OCI-LY7 (cell line): ENCODE measurements at regions of chr2 and their contacts with region 1.

Region 1: GRCh38 chr2:118548880-118549488 is 298.5 kb downstream of the EN1 start:
- DNase-seq: no peak
- H3K4me3 ChIP-seq: no peak overlapping the region
- H3K27ac ChIP-seq: no peak overlapping the region
- H3K4me1 ChIP-seq: no peaks in the 10 kb centered on the region
- CTCF ChIP-seq: no peak

Region 2: GRCh38 chr2:119085613-119086012 is 536.6 kb after region 1 on chr2:
- CTCF ChIA-PET with region 1: no interaction called
- POLR2A ChIA-PET with region 1: no interaction called
- intact Hi-C with region 1: no loop called
- DNase-seq: no peak
- H3K4me3 ChIP-seq: no peak overlapping the region
- H3K27ac ChIP-seq: no peak overlapping the region
- H3K4me1 ChIP-seq: no peaks in the 10 kb centered on the region
- CTCF ChIP-seq: no peak

Region 3: DNA sequence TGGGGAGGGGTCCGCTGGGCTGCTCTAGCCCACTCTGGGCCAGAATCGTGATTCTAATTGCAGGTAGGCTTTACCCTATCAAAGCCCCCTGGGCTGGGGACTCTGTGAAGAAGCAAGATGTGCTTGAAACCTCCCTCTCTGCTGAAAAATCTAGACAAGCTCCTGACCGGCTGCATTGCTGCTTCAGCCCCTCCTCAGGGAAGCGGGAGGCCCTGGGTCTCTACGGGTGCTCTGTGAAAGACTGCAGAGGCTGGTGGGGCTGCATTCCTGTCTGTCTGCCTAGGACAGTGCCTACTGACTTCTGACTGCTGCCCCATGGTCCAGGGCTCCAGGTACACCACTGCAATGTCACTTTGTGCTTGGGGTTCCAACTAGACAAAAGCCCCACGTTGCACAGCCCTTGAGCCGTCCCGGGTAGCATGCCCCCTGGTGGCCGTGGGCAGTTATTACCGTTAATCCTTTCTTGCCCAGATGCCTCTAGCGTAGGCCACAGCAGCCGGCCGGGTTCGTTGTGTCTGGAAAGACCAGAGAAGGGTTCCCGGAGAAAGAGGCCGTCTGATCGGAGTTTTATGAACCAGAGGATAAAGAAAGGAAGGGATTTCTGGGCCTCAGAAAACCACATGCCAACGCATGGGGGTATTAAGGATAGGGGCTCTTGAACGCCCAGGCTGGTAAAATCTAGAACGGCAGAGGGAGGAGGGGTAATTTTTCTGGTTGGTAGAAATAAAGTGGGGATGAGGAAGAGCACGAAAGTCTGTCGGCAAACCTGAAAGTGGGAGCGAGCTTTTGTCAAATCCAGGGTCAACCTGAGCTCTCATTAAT is 625.4 kb after region 1 on chr2:
- CTCF ChIA-PET with region 1: interaction called, 11 read pairs
- POLR2A ChIA-PET with region 1: no interaction called
- intact Hi-C with region 1: no loop called
- DNase-seq: peak; percentile 54
- H3K4me3 ChIP-seq: no peak overlapping the region
- H3K27ac ChIP-seq: no peak overlapping the region
- H3K4me1 ChIP-seq: no peaks in the 10 kb centered on the region
- CTCF ChIP-seq: peak; percentile 91